Gastrocnemius medialis (tissue), 4 donors: ENCODE measurements at regions of chr1 and their contacts with region 1.

Region 1: DNA sequence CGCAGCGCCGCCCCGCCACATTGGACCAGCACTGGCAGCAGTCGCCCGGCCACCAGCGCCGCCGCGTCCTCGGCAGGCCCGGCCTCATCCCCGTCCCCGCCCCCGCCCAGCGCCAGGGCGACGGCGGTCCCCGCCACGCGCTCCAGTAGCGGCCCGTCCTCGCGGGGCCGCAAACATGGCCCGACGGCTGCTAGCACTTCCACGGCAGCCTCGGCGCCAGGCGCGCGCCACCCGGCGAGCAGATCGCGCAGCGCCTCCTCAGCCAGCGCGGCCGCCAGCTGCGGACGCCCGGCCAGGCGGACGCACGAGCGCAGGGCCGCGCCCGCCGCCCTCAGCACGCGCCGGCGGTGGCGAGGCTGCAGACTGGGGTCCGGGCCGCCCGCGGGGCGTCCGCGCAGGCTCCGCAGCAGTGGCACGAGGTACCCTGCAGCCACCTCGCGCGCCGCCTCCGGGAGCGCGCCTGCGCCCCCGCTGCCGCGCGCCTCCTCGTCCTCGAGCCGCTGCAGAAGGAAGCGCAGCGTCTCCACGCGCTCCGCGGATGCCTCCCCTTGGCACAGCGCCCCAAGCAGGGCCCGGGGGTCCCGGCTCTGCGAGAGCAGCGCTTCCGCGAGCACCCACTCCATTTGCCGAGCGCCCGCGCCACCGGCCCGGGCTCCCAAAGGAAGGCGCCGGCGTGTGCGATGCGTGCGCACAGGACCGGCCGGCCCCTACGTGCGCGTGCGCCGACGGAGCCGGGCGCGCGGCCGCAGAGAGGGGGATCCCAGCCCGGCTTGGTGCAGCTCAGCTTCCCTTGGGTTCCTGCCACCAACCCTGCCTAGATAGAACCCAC is at the start of gene TARBP1:
- DNase-seq: peak; percentile 23 to 62
- ATAC-seq: peak; percentile 85 to 87
- H3K4me3 ChIP-seq: peak within 1 kb of the TSS; percentile 59 to 92 (median 76)
- H3K27ac ChIP-seq: peak within 1 kb of the TSS; percentile 79 to 92 (median 83)
- H3K4me1 ChIP-seq: peaks cover 0 to 8% of the 10 kb centered on the region in 2 donors
- H3K27me3 ChIP-seq: no peaks in the 10 kb centered on the region
- CTCF ChIP-seq: peak in 3 of 5 experiments; percentile 27 to 50 (median 29)
- POLR2A ChIP-seq: peak; percentile 54 to 57
- total RNA-seq, gene TARBP1: 5.7 to 11.9 (median 8.2) TPM

Region 2: DNA sequence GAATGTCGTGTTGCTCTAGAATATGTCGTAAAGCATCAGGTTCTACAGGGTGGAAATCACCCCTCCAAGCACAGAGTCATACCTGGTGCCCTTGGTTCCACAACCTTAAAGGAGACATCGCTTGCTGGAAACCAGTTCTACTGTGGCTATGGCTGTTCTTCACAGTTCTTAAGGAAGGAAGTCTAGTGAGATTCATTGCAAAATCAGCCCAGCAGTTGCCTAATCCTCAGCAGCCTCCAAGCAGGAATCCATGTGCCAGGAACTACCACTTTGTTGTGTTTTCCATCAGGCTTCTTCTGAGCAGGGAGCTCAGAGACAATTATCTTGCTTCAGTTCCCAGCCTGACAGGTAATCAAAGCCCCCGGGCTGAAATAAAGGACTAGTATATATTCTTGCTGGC is 619.2 kb before region 1 on chr1:
- in situ Hi-C with region 1: no loop called
- intact Hi-C with region 1: no loop called
- DNase-seq: no peak
- ATAC-seq: no peak
- H3K4me3 ChIP-seq: no peak overlapping the region
- H3K27ac ChIP-seq: no peak overlapping the region
- H3K4me1 ChIP-seq: no peaks in the 10 kb centered on the region
- H3K27me3 ChIP-seq: no peaks in the 10 kb centered on the region
- CTCF ChIP-seq: no peak
- POLR2A ChIP-seq: no peak

Region 3: GRCh38 chr1:234373064-234373958 is 105.4 kb before region 1 on chr1 and contains the start of gene COA6:
- in situ Hi-C with region 1: no loop called
- intact Hi-C with region 1: loop called (anchors 5 kb)
- DNase-seq: peak; percentile 88 to 91
- ATAC-seq: peak; percentile 99
- H3K4me3 ChIP-seq: peak within 1 kb of the TSS; percentile 82 to 96 (median 95)
- H3K27ac ChIP-seq: peak within 1 kb of the TSS; percentile 91 to 97 (median 96)
- H3K4me1 ChIP-seq: peaks cover 18 to 30% of the 10 kb centered on the region in 2 donors
- H3K27me3 ChIP-seq: no peaks in the 10 kb centered on the region
- CTCF ChIP-seq: peak in 1 of 5 experiments; percentile 53
- POLR2A ChIP-seq: peak; percentile 85 to 89
- total RNA-seq, gene COA6: 53.7 to 113 (median 58.7) TPM

Region 4: GRCh38 chr1:234400773-234401172 is 77.9 kb before region 1 on chr1:
- in situ Hi-C with region 1: no loop called
- intact Hi-C with region 1: loop called (anchors 5 kb)
- DNase-seq: no peak
- ATAC-seq: no peak
- H3K4me3 ChIP-seq: no peak overlapping the region
- H3K27ac ChIP-seq: peak overlapping the region; percentile 71 to 82 (median 79)
- H3K4me1 ChIP-seq: peaks cover 25 to 35% of the 10 kb centered on the region in 2 donors
- H3K27me3 ChIP-seq: no peaks in the 10 kb centered on the region
- CTCF ChIP-seq: no peak
- POLR2A ChIP-seq: no peak

Region 5: GRCh38 chr1:234851450-234852438 is 373.0 kb after region 1 on chr1:
- in situ Hi-C with region 1: loop called in 2 of 4 experiments (anchors 25 kb)
- intact Hi-C with region 1: no loop called
- DNase-seq: no peak
- ATAC-seq: no peak
- H3K4me3 ChIP-seq: no peak overlapping the region
- H3K27ac ChIP-seq: no peak overlapping the region
- H3K4me1 ChIP-seq: no peaks in the 10 kb centered on the region
- H3K27me3 ChIP-seq: no peaks in the 10 kb centered on the region
- CTCF ChIP-seq: no peak
- POLR2A ChIP-seq: no peak

Region 6: GRCh38 chr1:234893725-234894630 is 415.3 kb after region 1 on chr1:
- in situ Hi-C with region 1: loop called in 1 of 4 experiments (anchors 25 kb)
- intact Hi-C with region 1: no loop called
- DNase-seq: no peak
- ATAC-seq: no peak
- H3K4me3 ChIP-seq: no peak overlapping the region
- H3K27ac ChIP-seq: peak overlapping the region; percentile 64 to 75 (median 66)
- H3K4me1 ChIP-seq: peaks cover 37 to 39% of the 10 kb centered on the region in 2 donors
- H3K27me3 ChIP-seq: no peaks in the 10 kb centered on the region
- CTCF ChIP-seq: no peak
- POLR2A ChIP-seq: no peak